PC-3 (cell line): ENCODE measurements at regions of chr18 and their contacts with region 1.

Region 1: DNA sequence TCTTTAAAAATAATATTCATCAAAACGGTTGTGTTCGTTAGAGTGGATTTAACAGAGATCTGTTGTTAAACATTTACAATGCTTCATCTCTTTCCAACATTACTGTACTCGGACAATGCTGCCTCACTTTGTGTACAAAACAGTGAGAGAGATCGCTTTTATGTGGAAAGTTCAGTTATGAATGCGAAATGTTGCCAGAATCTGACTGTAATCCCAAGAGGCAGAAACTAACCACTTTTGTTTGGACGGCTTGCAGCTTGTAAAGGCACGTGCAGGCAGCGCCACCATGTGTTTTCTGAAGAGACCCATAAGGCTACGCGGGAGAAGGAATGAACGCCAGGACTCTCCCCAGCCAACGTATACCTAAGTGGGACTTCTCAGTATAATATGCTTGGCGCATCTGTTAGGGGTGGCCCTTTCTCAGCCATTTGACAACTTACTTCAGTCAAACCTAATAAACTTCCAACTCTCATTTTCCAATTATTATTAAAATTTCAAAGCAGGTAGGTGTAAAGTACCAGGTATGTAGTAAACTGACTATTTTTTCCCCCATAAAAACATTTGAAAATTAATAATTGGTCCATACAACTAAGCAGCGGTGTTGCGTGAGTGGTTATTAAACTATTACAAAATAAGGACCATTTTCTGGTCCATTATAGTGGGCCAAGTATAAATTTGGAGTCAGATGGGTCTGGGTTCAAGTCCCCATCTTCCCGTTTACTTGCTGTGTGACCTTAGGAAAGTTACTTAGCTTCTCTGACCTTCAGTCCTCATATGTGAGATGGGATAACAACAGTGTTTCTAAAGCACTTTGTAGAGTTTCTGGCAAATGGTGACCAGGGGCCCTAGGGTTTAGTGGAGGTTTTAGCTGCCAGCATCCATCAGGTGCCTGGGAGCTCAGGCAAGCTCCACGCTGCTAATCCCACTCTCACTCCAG is 5.6 kb upstream of the NAPG start:
- DNase-seq: peak; percentile 82
- ATAC-seq: peak; percentile 95
- H3K4me3 ChIP-seq: peak overlapping the region; percentile 36; the same call in 1 of the 2 replicates
- H3K27ac ChIP-seq: no peak overlapping the region
- H3K4me1 ChIP-seq: peaks cover 13% of the 10 kb centered on the region
- H3K27me3 ChIP-seq: peaks cover 45% of the 10 kb centered on the region
- CTCF ChIP-seq: peak; percentile 91

Region 2: DNA sequence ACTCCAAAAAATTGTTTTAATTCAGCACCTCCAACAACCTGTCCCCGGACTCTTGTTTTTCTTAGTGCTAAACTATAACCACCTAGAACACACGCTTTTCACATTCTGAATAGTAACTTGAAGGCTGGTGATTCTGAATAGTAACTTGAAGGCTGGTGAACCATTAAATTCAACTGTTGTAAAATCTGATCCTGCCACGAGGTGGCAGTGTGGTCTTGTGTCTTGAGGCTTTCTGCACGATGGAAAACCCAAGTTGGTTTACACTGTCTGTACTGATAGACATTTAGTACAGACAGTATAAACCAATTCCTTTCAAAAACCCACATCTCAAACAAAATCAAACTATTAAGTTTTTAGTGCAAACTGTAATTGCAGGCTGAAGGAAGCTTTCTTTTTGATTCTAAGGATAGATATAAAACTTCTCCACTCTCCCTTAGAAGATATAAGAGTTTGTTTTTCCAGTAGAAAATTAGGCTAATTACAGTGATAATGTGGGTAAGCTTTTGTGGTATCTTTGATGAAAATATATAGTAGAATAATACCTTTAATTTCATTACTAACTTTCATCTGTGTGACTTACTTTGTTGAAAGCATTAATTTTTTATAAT is 548.9 kb before region 1 on chr18:
- CTCF ChIA-PET with region 1: no interaction called
- POLR2A ChIA-PET with region 1: no interaction called
- intact Hi-C with region 1: loop called (anchors 1 kb)
- DNase-seq: peak; percentile 93
- ATAC-seq: peak; percentile 84
- H3K4me3 ChIP-seq: no peak overlapping the region
- H3K27ac ChIP-seq: no peak overlapping the region
- H3K4me1 ChIP-seq: no peaks in the 10 kb centered on the region
- H3K27me3 ChIP-seq: no peaks in the 10 kb centered on the region
- CTCF ChIP-seq: peak; percentile 93

Region 3: GRCh38 chr18:10006311-10006893 is 513.9 kb before region 1 on chr18:
- CTCF ChIA-PET with region 1: interaction called, 6 read pairs
- POLR2A ChIA-PET with region 1: no interaction called
- intact Hi-C with region 1: loop called (anchors 1 kb)
- DNase-seq: peak; percentile 27
- ATAC-seq: peak; percentile 51
- H3K4me3 ChIP-seq: no peak overlapping the region
- H3K27ac ChIP-seq: no peak overlapping the region
- H3K4me1 ChIP-seq: no peaks in the 10 kb centered on the region
- H3K27me3 ChIP-seq: peaks cover 44% of the 10 kb centered on the region
- CTCF ChIP-seq: peak; percentile 42; the same call in 1 of the 2 replicates

Region 4: DNA sequence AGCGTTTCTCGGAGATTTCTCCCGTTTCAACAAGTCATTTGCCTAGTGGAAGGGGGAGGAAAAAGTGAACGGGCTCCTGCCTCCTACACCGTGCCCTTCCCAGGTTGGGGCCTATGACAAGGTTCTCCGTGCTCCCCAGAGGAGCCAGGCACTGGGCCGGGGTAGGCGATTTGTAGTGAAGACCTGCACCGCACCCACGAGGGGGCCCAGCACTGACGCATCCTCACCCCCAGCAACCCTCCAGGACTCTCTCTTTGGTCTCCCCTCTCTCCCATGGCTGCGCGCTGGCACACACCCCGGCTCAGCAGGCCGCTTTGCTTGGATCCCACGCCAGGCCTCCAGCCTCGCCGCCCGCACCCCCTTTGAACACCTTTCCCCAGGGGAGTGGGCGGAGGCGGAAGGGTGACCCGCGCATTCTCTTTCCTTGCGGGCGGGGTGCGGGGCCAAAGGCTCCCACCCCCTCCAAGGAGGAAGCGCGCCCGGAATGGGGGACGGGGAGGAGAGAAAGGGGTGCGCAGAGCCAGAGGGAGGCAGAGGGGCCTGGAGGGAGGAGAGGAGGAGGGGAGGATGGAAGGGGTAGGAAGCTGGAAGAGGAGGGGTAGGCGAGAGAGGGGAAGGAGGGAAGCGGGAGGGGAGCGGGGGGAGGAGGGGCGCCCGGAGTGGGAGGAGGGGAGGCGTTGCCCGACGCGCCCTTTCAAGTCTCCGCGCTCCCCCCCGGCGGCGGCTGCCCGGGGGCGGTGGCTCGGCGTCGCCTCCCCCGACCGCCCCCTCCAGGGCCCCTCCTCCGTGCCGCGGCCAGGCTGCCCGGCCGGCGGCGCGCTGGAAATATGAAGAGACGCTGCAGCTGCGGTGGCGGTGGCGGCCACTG is 66.2 kb before region 1 on chr18 and contains the start of gene APCDD1:
- CTCF ChIA-PET with region 1: no interaction called
- POLR2A ChIA-PET with region 1: no interaction called
- intact Hi-C with region 1: loop called (anchors 10 kb)
- DNase-seq: no peak
- ATAC-seq: no peak
- H3K4me3 ChIP-seq: no peak within 1 kb of the TSS
- H3K27ac ChIP-seq: no peak within 1 kb of the TSS
- H3K4me1 ChIP-seq: no peaks in the 10 kb centered on the region
- H3K27me3 ChIP-seq: peaks cover 94% of the 10 kb centered on the region
- CTCF ChIP-seq: no peak
- total RNA-seq, gene APCDD1: not detected in 2 replicates